Activated naive CD4-positive, alpha-beta T cell treated with anti-CD3 and anti-CD28 coated beads, Interleukin-2, amount 10 ng/mL, durations not matched to agents 7 days and 5 days (primary cell): ENCODE measurements at regions of chr4 and their contacts with region 1.

Region 1: DNA sequence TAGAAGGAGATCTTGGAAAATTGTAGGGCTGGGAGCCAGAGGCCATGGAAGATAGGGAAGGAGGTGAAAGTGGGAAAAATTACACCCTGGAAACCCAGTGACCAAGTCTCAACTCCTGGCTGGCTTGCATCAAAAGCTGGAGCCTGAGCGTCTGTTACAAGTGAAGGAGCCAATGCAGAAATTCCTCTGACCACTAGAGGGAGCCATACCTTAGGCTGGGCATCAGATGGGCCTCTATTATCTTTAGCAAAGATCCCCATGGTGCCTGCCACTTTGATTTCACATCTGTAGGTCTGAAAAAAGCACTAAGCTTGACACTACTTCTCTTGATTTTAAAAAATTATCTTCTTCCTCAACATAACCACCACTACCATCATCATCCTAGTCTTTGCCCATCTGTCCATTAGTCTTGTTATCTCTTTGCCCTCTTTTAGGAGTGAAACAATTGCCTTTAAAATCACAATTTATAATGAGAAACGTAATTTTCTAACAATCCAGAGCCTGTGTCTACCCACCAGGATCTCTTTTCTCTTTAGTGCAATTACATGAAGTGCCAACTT is 62.9 kb downstream of the ANAPC4 start:
- DNase-seq: peak; percentile 70
- H3K4me3 Mint-ChIP-seq: no peak overlapping the region
- H3K27ac Mint-ChIP-seq: no peak overlapping the region
- H3K4me1 Mint-ChIP-seq: no peaks in the 10 kb centered on the region
- H3K27me3 Mint-ChIP-seq: peaks cover 3% of the 10 kb centered on the region

Region 2: GRCh38 chr4:25379591-25379990 is 60.4 kb before region 1 on chr4:
- CTCF ChIA-PET with region 1: no interaction called
- DNase-seq: no peak
- H3K4me3 Mint-ChIP-seq: no peak overlapping the region
- H3K27ac Mint-ChIP-seq: no peak overlapping the region
- H3K4me1 Mint-ChIP-seq: peaks cover 18% of the 10 kb centered on the region
- H3K27me3 Mint-ChIP-seq: no peaks in the 10 kb centered on the region

Region 3: DNA sequence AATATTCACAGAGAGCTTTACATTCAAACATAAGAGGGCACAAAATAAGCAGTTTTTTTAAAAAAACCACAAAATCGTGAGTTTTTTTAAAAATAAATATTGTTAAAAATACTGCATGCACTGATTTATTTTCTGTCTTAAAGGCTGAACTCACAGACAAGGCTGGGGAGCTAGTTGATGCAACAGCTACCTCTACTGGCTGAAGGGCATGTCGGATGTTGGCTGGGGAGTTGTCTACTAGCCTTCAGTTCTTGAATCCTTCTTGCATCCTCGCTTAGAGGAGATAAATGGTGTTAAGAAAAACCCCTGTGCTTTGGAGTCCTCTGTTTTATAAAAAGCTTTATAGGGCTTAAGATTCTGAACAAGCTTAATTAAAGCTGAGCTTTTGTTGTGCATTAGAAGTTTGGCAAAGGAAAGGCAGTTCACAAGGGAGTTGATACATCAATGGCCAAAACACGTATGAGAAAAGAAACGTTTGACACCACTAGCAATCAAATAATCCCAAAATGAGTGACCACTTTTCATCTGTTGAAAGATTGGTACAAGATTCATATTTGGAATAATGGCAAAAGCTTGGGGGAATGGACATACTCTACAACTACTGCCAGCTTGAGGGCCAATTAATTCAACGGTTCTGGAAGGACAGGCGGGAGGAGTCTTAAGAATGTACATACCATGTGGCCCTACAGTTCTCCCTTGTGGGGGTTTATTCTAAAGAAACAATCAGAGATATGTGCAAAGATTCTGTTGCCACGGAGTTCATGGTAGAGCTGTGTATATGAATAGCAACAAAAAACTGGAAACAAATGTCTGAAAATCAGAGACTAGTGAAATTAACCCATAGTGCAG is 328.1 kb after region 1 on chr4:
- CTCF ChIA-PET with region 1: interaction called, 19 read pairs
- DNase-seq: peak; percentile 42
- H3K4me3 Mint-ChIP-seq: no peak overlapping the region
- H3K27ac Mint-ChIP-seq: no peak overlapping the region
- H3K4me1 Mint-ChIP-seq: no peaks in the 10 kb centered on the region
- H3K27me3 Mint-ChIP-seq: no peaks in the 10 kb centered on the region